AG04449 (cell line): ENCODE measurements at regions of chr1 and their contacts with region 1.

Region 1: GRCh38 chr1:205658943-205659581 is 21.2 kb downstream of the SLC45A3 start:
- DNase-seq: no peak
- H3K4me3 ChIP-seq: no peak overlapping the region
- CTCF ChIP-seq: peak; percentile 93

Region 2: GRCh38 chr1:205421798-205422197 is 237.3 kb before region 1 on chr1 and contains the start of gene LEMD1:
- CTCF ChIA-PET with region 1: no interaction called
- POLR2A ChIA-PET with region 1: no interaction called
- DNase-seq: no peak
- H3K4me3 ChIP-seq: no peak within 1 kb of the TSS
- CTCF ChIP-seq: no peak

Region 3: DNA sequence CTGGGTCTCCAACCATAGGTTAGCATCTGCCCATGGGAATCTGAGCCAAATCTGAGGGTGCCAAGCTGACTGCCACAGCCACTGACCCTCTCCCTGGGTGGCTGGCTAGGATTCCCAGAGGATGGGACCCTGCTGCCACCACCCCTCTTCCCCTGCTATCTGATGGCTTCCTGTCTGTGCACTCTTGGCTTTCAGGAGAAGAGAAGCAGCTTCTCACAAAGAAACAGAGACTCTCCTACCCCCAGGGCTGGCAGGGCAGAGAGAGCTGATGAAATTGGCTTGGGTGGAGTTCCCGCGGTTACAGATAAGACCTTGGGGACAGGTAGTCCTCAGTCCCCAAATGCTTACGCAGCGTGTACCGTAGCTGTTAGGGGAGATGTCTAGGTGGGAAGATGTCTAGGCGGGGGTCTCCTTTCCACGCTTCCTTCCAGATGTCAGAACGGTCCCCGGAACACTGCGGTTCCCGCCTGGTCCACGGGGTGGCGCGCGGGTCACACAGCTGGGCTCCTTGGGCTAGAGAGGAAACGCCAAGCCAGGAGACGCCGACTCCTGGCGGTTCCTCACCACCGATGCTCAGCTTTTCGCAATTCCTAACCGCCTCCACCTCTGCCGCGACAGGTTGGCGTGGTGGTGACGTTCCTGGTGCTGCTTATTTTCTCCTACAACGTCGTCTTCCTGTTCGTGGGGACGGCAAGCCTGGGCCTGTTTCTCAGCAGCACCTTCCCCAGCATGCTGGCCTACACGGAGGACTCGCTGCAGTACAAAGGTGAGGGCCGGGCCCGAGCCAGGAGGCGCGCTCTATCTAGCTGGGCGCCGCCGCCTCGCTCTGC is 67.3 kb before region 1 on chr1:
- CTCF ChIA-PET with region 1: interaction called, 741 read pairs
- POLR2A ChIA-PET with region 1: interaction called, 6 read pairs
- DNase-seq: no peak
- H3K4me3 ChIP-seq: peak overlapping the region; percentile 52
- CTCF ChIP-seq: peak; percentile 100

Region 4: GRCh38 chr1:205680073-205680851 is 21.2 kb after region 1 on chr1 and contains the start of gene SLC45A3:
- CTCF ChIA-PET with region 1: interaction called, 87 read pairs
- POLR2A ChIA-PET with region 1: no interaction called
- DNase-seq: no peak
- H3K4me3 ChIP-seq: peak within 1 kb of the TSS; percentile 66
- CTCF ChIP-seq: no peak

Region 5: DNA sequence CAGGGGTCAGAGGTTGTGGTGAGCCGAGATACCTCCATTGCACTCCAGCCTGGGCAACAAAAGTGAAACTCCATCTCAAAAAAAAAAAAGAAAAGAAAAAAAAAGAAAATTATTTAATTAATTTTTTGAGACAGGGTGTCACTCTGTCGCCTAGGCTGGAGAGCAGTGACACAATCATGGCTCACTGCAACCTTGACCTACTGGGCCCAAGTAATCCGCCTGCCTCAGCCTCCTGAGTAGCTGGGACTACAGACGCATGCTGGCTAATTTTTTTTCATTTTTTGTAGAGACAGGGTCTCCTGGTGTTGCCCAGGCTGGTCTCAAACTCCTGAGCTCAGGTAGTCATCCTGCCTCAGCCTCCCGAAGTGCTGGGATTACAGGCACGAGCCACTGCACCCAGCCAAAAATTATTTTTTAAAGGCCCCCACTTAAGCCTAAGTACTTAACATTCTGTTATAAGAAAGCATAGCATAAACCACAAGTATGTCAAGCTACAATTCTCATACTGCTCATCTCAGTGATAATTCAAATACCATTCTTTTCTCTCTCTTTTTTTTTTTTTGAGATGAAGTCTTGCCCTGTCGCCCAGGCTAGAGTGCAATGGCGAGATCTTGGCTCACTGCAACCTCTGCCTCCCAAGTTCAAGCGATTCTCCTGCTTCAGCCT is 71.0 kb after region 1 on chr1:
- CTCF ChIA-PET with region 1: interaction called, 16 read pairs
- POLR2A ChIA-PET with region 1: no interaction called
- DNase-seq: no peak
- H3K4me3 ChIP-seq: no peak overlapping the region
- CTCF ChIP-seq: no peak

Region 6: GRCh38 chr1:205907794-205908193 is 248.7 kb after region 1 on chr1:
- CTCF ChIA-PET with region 1: interaction called, 24 read pairs
- POLR2A ChIA-PET with region 1: no interaction called
- DNase-seq: no peak
- H3K4me3 ChIP-seq: no peak overlapping the region
- CTCF ChIP-seq: peak; percentile 73

Region 7: DNA sequence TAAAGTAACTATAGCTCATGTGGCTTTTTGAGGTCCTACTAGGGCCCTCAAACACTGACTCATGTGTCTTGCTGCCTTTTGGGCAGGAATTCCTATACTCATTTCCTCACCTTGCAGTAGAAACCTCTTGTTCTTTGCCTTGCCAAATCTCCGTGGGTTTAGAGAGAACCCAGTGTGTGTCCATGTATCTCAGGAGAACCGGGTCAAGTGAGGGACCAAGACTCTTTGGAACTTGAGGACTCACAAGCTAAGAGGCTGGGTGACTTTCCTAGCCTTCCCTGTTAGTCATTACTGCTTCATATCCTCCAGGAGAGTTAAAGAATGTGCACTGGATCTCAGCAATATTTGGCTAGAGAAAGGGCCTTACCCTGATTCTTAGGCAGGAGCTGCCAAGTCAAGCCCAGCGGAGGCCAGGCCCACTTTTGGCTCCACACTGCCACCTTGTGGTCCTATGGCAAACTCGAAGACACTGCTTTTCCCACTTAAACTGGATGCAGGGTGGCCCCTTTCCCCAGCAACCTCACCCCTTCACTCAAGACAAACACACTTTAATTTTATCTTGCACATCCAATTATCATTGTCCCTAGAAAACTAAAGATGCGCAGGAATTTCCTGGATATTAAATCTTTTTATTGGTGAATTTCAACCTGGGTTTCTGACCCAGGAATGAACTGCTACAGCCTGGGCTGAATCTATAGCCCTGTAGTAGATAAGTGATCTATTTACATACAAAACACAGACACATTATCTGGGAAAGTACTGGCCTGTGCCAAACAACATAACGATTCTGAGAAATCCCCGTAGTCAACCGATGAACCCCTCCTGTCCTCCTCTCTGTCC is 447.5 kb after region 1 on chr1:
- CTCF ChIA-PET with region 1: interaction called, 17 read pairs
- POLR2A ChIA-PET with region 1: no interaction called
- DNase-seq: peak; percentile 50
- H3K4me3 ChIP-seq: no peak overlapping the region
- CTCF ChIP-seq: peak; percentile 89